ENCODE measurements at regions of chr5 and their contacts with region 1.

Region 1: GRCh38 chr5:17929171-17929570 is 294.9 kb downstream of the TAF11L14 start:
- DNase-seq: no peak

Region 2: GRCh38 chr5:17951392-17952115 is 22.4 kb after region 1 on chr5:
- intact Hi-C with region 1: loop called in 1 of 2 experiments (anchors 1 kb)
- DNase-seq: no peak